ENCODE measurements at regions of chr5 and their contacts with region 1.

Region 1: GRCh38 chr5:146124580-146124979 is 19.2 kb upstream of the PLAC8L1 start:
- DNase-seq: no peak
- ATAC-seq: no peak
- H3K4me3 ChIP-seq: no peak overlapping the region
- H3K27ac ChIP-seq: no peak overlapping the region
- H3K4me1 ChIP-seq: no peaks in the 10 kb centered on the region
- H3K27me3 ChIP-seq: no peaks in the 10 kb centered on the region
- CTCF ChIP-seq: no peak

Region 2: GRCh38 chr5:146165460-146165859 is 40.9 kb after region 1 on chr5:
- intact Hi-C with region 1: loop called (anchors 2 to 5 kb)
- DNase-seq: no peak
- ATAC-seq: no peak
- H3K4me3 ChIP-seq: no peak overlapping the region
- H3K27ac ChIP-seq: no peak overlapping the region
- H3K4me1 ChIP-seq: no peaks in the 10 kb centered on the region
- H3K27me3 ChIP-seq: no peaks in the 10 kb centered on the region
- CTCF ChIP-seq: no peak

Region 3: GRCh38 chr5:146475190-146475801 is 350.7 kb after region 1 on chr5:
- intact Hi-C with region 1: loop called (anchors 10 kb)
- DNase-seq: no peak
- ATAC-seq: no peak
- H3K4me3 ChIP-seq: no peak overlapping the region
- H3K27ac ChIP-seq: no peak overlapping the region
- H3K4me1 ChIP-seq: no peaks in the 10 kb centered on the region
- H3K27me3 ChIP-seq: no peaks in the 10 kb centered on the region
- CTCF ChIP-seq: no peak

Region 4: DNA sequence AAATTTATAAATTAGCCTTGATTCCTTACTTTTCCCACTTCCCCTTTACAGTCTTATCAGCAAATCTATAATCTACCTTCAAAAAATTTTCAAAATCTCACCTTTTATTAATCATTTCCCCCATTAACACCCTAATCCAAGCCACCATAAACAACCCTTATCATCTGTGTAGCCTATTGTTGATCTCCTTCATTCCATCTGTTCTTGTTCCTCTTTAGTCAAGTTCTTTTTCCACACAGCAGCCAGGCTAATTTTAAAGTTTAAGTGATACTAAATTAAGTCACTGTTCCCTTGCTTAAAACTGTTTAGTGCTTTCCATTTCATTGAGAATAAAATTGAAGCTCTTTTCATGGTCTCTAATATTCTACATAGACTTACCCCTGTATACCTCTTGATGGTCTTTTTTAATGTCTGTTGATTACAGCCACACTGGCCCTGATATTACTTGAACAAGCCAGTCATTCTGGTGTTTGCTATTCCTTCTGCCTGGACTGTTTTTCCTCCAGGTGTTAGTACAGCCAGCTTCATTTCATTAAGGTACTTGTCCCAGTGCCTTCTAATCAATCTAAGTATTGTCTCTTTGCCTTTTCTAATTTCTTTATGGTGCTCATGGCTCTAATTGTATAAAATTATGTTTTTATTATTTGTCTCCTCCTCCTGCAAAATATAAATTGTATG is 360.3 kb after region 1 on chr5:
- intact Hi-C with region 1: loop called in 1 of 2 experiments (anchors 10 kb)
- DNase-seq: no peak
- ATAC-seq: no peak
- H3K4me3 ChIP-seq: no peak overlapping the region
- H3K27ac ChIP-seq: no peak overlapping the region
- H3K4me1 ChIP-seq: no peaks in the 10 kb centered on the region
- H3K27me3 ChIP-seq: no peaks in the 10 kb centered on the region
- CTCF ChIP-seq: no peak

Measured in psoas muscle (tissue), 8 donors.